Posterior cingulate gyrus (tissue), 11 donors: ENCODE measurements at regions of chr9 and their contacts with region 1.

Region 1: GRCh38 chr9:123724211-123724796 is 205.6 kb downstream of the DENND1A start:
- DNase-seq: peak in 7 of 10 donors; percentile 18 to 86 (median 28)

Region 2: DNA sequence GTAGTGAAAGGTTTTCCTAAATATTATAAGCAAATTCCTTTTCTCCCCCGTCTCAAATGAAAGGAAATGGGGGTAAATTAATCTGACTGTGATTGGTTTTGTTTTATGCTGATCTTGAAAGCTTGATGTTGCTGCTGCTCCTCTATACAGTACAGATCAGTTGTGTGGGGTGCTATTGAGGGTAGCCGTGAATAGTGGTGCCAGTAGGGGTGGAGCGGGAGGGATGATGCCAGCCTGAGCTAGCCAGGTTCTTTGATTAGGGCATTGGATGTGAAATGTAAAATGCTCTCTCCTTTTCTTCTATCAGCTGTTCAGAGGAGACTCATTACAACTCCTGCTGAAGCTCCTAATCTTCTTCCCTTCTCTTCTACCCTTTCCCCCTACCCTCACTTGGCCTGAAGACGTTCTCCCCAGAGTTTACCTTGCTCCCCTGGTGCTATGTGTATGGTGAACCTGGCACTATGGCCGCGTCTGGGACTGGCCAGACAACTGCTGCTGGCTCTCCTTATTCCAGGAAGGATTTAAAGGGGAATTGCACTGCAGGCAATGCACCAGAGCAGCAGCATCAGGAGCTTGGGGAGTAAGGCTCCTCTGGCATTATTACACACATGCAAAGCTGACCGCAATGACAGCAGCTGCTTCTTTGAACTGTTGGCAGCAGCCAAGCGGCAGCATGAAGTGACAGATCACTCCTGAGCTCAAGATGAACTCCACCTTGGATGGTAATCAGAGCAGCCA is 690.3 kb before region 1 on chr9:
- intact Hi-C with region 1: no loop called
- DNase-seq: peak in 6 of 10 donors; percentile 22 to 82 (median 54)

Region 3: GRCh38 chr9:123568691-123569688 is 155.3 kb before region 1 on chr9:
- intact Hi-C with region 1: no loop called
- DNase-seq: no peak

Region 4: DNA sequence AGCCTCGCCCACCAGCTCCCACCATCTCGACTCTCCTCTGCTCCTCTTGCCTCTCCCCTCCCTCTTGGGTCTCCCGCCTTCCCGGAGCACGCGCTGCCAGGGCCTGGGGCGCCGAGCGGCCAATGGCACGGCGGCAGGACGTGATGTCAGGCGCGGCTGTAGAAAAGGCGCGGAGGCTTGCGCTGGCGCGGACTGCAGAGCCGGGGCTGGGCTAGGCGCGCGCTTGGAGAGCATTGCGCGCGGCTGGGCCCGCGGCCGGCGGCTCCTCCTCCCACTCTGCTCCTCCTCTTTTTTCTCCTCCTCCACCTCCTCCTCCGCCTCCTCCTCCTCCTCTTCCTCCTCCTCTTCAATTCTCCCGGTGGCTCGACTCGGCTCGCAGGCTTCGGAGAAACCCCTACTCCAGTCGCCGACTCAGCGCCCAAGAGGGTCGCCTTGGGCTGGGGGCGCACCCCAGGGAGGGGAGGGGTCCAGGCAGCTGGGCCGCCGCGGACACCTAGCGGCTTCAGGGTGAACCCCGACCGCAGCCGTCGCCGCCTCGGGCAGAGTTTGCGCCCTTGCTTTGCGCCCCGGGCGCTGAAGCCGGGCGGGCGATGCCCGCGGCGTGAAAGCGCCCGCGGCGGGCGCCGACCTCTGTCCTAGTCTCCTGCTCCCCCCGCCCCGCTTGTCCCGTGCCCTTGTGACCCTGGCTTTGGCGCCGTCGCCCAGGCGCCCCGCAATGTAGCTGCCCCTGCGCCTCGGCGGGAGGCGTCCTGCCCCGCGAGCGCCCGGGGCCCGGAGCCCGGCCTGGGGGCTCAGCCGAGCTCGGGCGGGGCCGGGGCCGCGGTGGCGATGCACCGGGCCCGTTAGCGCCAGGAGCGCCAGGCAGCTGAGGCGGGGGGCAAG is 287.4 kb after region 1 on chr9 and contains the start of gene LHX2:
- intact Hi-C with region 1: loop called (anchors 10 kb)
- DNase-seq: peak; percentile 41 to 97 (median 84)

Region 5: DNA sequence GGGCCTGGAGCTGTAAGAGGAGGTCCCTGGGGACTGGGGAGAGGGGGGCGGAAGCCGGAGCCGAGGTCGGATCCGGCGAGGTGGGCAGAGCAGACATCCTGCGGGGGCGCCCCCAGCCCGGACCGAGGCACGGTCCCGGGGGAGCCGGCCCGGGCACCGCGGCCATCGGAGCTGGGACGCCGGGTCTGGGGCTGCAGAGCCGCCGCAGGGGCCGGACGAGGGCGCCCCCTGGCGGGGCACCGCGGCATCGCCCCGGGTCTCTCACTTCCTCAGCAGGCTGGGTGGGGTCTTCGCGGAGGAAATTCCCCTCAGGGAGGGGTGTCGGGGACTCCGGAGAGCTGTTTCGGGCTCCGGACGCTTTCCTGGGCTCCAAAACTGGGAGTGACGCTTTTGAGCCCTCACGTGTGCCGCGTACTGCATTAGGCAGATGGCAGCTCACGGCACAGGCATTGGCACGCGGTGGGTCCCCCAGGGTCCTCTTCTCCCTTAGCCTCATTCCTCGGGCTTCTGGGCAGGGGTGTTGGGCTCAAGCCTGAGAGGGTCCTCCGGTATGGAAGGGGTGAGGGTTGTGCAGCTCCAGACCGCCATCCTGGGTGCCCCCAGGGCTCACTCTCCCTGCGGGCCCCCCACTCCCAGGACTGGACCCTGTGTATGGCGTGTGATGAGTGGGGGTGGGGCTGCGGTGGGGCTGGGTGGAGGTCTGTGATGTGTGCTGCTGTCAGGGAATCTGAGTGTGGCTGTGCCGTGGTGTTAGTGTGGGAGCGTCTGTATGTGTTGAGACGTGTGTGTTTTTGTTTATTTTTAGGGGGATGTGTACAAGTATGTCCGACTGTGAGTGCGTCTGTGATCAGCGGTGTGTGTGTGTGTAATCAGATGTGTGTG is 316.9 kb after region 1 on chr9:
- intact Hi-C with region 1: loop called (anchors 5 kb)
- DNase-seq: peak in 7 of 10 donors; percentile 39 to 93 (median 62)